Left cardiac atrium (tissue), 4 donors: ENCODE measurements at regions of chr2 and their contacts with region 1.

Region 1: DNA sequence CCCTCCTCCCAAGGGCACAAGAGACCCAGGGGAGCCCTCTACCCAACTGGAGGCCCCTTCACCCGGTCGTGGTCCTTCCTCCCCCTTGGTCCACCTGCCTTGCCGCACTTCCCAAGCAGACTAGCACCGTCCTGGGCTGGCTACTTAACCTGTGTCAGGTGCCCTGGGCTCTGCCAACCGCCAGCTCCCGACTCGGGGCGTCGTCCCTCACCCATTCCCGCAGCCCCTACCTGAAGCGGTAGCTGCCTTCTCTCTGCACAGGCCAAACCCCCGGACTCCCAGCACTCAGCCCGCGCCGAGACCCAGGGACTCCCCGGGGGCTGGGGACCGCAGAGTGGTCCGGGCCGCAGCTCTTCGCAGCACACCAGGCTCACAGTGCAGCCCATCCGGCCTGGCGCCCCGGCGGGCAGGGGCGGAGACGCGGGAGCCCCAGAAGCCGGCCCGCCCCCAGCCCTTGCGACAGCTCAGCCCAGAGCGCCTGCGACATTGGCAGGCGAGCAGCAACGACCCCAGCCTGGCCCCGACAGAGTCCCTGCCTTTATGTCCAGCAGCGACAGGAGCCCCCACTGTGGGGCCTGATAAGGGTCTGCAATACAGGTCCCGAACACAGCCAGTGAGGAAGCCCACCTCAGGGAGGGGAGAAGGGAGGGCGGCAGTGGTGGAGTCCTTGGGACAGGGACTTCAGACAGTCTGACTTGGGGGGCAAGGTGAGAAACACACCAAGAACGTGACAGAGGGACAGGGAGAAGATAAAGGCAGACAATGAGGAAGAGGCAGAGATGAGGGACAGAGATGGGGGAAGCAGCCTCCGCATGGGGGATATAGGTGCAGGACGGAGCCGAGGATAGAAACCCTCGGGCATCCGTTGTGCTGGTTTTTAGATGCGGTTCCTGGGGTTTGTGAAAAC is 31.0 kb upstream of the TNS1 start:
- DNase-seq: no peak
- ATAC-seq: peak; percentile 5 to 20

Region 2: GRCh38 chr2:217993817-217994463 is 39.9 kb before region 1 on chr2:
- intact Hi-C with region 1: loop called in 1 of 2 experiments (anchors 5 kb)
- DNase-seq: peak; percentile 71
- ATAC-seq: peak in 1 of 2 donors; percentile 42